ENCODE measurements at regions of chr11 and their contacts with region 1.

Region 1: GRCh38 chr11:91932151-91932821 is 292.3 kb upstream of the FAT3 start:
- DNase-seq: no peak
- ATAC-seq: no peak
- H3K4me3 ChIP-seq: no peak overlapping the region
- H3K4me3 Mint-ChIP-seq: no peak overlapping the region
- H3K27ac ChIP-seq: no peak overlapping the region
- H3K27ac Mint-ChIP-seq: no peak overlapping the region
- H3K4me1 ChIP-seq: no peaks in the 10 kb centered on the region
- H3K4me1 Mint-ChIP-seq: no peaks in the 10 kb centered on the region
- H3K27me3 ChIP-seq: no peaks in the 10 kb centered on the region
- H3K27me3 Mint-ChIP-seq: no peaks in the 10 kb centered on the region
- CTCF ChIP-seq: no peak

Region 2: DNA sequence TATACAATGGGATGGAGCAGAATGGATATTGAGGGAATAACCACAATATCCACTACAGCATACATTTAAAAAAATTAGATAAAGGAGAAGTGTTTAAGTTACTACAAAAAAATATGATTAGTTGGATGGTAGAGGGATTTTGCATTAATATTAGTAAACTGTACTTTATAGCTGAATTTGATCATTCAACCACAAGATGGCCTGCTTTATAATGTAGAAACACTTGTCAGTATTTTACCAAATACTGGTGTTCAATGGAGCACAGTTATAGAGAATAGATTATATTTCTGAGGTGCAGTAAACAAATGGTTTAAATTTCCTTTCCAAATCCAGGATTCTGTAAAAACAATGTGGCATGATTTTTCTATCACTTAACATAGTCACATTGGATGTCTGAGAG is 890.7 kb before region 1 on chr11:
- CTCF ChIA-PET with region 1: no interaction called
- POLR2A ChIA-PET with region 1: no interaction called
- intact Hi-C with region 1: no loop called
- DNase-seq: no peak
- ATAC-seq: no peak
- H3K4me3 ChIP-seq: no peak overlapping the region
- H3K4me3 Mint-ChIP-seq: no peak overlapping the region
- H3K27ac ChIP-seq: no peak overlapping the region
- H3K27ac Mint-ChIP-seq: no peak overlapping the region
- H3K4me1 ChIP-seq: no peaks in the 10 kb centered on the region
- H3K4me1 Mint-ChIP-seq: no peaks in the 10 kb centered on the region
- H3K27me3 ChIP-seq: no peaks in the 10 kb centered on the region
- H3K27me3 Mint-ChIP-seq: no peaks in the 10 kb centered on the region
- CTCF ChIP-seq: no peak

Region 3: GRCh38 chr11:91997226-91997625 is 64.9 kb after region 1 on chr11:
- CTCF ChIA-PET with region 1: no interaction called
- POLR2A ChIA-PET with region 1: no interaction called
- intact Hi-C with region 1: loop called in 1 of 2 experiments (anchors 10 kb)
- DNase-seq: no peak
- ATAC-seq: no peak
- H3K4me3 ChIP-seq: no peak overlapping the region
- H3K4me3 Mint-ChIP-seq: no peak overlapping the region
- H3K27ac ChIP-seq: no peak overlapping the region
- H3K27ac Mint-ChIP-seq: no peak overlapping the region
- H3K4me1 ChIP-seq: no peaks in the 10 kb centered on the region
- H3K4me1 Mint-ChIP-seq: no peaks in the 10 kb centered on the region
- H3K27me3 ChIP-seq: no peaks in the 10 kb centered on the region
- H3K27me3 Mint-ChIP-seq: no peaks in the 10 kb centered on the region
- CTCF ChIP-seq: no peak

Measured in CD4-positive, alpha-beta T cell (primary cell).